ENCODE measurements at regions of chr6 and their contacts with region 1.

Region 1: DNA sequence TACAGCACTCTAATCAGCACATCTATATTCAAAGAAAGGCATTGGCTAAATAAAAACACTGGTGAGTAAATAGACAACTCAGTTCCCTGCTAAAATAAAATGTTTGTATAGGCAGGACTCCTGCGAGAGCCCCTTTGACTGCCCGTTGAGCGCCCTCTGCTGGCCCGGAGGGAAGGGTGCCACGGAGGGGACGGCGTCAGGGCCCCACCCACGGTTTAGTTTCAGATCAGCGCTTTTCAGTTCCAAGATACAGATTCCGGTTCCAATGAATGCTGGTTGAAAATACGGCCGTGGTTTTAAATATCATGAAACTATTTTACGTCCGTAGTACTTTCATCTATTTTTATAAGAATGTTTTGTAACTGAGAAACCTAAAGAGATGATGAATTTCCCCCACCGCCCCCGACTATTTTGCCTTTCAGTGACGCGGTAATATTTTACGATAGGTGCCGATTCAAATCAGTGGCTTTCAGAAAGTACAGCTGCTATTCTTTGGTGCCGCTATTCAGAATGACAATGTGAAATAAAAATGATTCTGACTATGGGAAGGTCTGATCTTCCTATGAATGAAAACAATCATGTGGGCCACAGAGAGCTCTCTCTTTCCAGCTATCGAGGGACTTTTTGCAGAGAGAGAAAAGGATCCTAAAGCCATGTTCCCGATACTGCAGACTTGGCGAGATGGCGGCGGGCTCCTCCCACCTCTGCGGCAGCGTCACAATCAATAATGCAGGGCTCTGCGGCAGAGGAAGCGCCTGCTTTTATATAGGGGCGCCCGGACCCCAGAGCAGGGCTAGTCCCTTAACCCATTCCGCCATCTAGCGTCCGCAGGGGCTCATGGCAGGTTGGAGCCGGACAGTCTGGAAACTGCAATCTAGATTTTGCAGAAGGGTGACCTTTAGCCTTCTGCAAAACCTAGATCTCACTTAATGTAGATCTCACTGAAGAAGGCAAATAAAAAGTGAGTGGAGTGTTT is 10.6 kb upstream of the CCN6 start:
- DNase-seq: peak; percentile 84 to 95 (median 91)
- ATAC-seq: peak; percentile 89 to 95 (median 90)
- H3K4me3 ChIP-seq: peak overlapping the region; percentile 63 to 80
- H3K4me3 Mint-ChIP-seq: peak overlapping the region; percentile 92 to 96 (median 96)
- H3K27ac ChIP-seq: peak overlapping the region; percentile 94
- H3K27ac Mint-ChIP-seq: peak overlapping the region; percentile 97 to 99
- H3K4me1 ChIP-seq: peaks cover 1 to 4% of the 10 kb centered on the region in 2 experiments
- H3K4me1 Mint-ChIP-seq: peaks cover 24 to 32% (median 28%) of the 10 kb centered on the region in 3 donors
- H3K27me3 ChIP-seq: no peaks in the 10 kb centered on the region
- H3K27me3 Mint-ChIP-seq: no peaks in the 10 kb centered on the region

Region 2: GRCh38 chr6:110873981-110874879 is 1169.1 kb before region 1 on chr6 and contains the start of gene AMD1:
- CTCF ChIA-PET with region 1: interaction called in 1 of 2 experiments, 5 read pairs
- POLR2A ChIA-PET with region 1: interaction called in 1 of 2 experiments, 16 read pairs
- DNase-seq: peak; percentile 79 to 98 (median 95)
- ATAC-seq: peak; percentile 78 to 80 (median 78)
- H3K4me3 ChIP-seq: peak within 1 kb of the TSS; percentile 91 to 97
- H3K4me3 Mint-ChIP-seq: peak within 1 kb of the TSS; percentile 97 to 99 (median 98)
- H3K27ac ChIP-seq: peak within 1 kb of the TSS; percentile 89
- H3K27ac Mint-ChIP-seq: peak within 1 kb of the TSS; percentile 98
- H3K4me1 ChIP-seq: peaks cover 20 to 28% of the 10 kb centered on the region in 2 experiments
- H3K4me1 Mint-ChIP-seq: peaks cover 28 to 40% (median 32%) of the 10 kb centered on the region in 3 donors
- H3K27me3 ChIP-seq: no peaks in the 10 kb centered on the region
- H3K27me3 Mint-ChIP-seq: no peaks in the 10 kb centered on the region
- total RNA-seq, gene AMD1: 54.8 to 117 (median 57.6) TPM

Region 3: DNA sequence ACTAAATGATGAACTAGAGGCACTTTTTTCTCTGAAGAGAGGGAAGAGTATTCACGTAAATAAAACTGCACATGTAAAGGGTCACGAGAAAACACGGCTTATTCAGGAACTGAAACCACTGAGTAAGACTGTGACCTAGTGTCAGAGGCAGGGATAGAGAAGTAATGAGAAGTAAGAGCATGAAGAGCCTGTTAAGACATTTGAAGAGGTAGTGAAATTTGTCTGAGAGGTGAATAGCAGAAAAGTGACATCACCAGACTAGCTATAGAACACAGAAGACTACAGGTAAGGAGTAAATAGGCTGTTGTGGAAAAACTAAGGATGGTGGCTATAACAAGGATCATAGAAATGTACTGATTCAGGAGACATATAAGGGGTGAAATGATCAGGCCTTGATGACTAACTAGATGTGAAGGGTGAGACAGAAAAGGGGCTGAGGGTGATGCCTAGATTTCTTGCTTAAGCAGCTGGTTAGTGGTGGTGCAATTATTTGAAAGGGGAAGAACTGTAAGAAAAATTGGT is 637.1 kb before region 1 on chr6:
- CTCF ChIA-PET with region 1: no interaction called
- POLR2A ChIA-PET with region 1: interaction called in 1 of 2 experiments, 14 read pairs
- DNase-seq: peak in 1 of 35 experiments; percentile 9
- ATAC-seq: no peak
- H3K4me3 ChIP-seq: no peak overlapping the region
- H3K4me3 Mint-ChIP-seq: no peak overlapping the region
- H3K27ac ChIP-seq: no peak overlapping the region
- H3K27ac Mint-ChIP-seq: peak overlapping the region in 1 of 2 donors; percentile 0
- H3K4me1 ChIP-seq: no peaks in the 10 kb centered on the region
- H3K4me1 Mint-ChIP-seq: peaks cover 0 to 9% (median 7%) of the 10 kb centered on the region in 3 donors
- H3K27me3 ChIP-seq: no peaks in the 10 kb centered on the region
- H3K27me3 Mint-ChIP-seq: no peaks in the 10 kb centered on the region

Region 4: DNA sequence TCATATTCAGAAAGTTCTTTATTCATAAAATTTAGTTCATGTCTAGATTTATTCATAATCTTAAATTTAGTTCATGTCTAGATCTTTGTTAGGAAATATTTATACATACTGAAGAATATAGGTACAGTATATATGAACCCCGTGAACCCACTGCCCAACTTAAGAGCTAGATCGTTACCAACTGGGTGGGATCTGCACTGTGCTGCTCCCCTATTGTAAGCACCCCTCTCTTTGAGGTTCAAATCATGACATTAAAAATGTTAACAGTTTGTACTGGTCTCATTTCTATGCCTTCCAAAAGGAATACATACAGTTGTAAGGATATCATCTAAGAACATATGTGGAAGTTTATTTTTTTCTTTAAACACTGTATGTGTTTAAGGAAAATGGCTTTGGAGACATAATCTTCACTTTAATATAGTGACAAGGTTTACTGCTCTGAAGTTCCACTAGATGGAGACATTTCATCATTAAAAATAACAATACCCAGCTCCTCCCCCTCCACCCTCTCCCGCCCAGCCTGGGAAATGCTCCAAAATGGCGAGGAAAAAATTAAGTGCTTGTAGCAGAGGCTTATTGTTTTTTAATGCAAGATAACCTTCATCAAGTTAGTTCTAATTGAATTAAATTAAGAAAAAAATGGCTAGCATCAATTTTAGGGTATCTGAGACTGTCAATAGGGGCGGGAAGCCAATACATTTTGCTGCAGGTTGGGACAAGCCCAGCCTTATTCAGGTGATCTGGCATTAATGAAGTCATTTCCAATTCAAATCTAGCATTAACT is 333.5 kb before region 1 on chr6:
- CTCF ChIA-PET with region 1: interaction called, 14 to 54 read pairs
- POLR2A ChIA-PET with region 1: interaction called, 4 to 5 read pairs
- DNase-seq: peak in 34 of 35 experiments; percentile 14 to 83 (median 54)
- ATAC-seq: peak; percentile 81 to 86 (median 83)
- H3K4me3 ChIP-seq: no peak overlapping the region
- H3K4me3 Mint-ChIP-seq: peak overlapping the region in 1 of 3 donors; percentile 30
- H3K27ac ChIP-seq: peak overlapping the region; percentile 59
- H3K27ac Mint-ChIP-seq: peak overlapping the region; percentile 81 to 87
- H3K4me1 ChIP-seq: peaks cover 37 to 42% of the 10 kb centered on the region in 2 experiments
- H3K4me1 Mint-ChIP-seq: peaks cover 50 to 70% (median 53%) of the 10 kb centered on the region in 3 donors
- H3K27me3 ChIP-seq: no peaks in the 10 kb centered on the region
- H3K27me3 Mint-ChIP-seq: no peaks in the 10 kb centered on the region

Region 5: GRCh38 chr6:111804627-111805235 is 238.6 kb before region 1 on chr6:
- CTCF ChIA-PET with region 1: interaction called in 1 of 2 experiments, 10 read pairs
- POLR2A ChIA-PET with region 1: interaction called in 1 of 2 experiments, 10 read pairs
- DNase-seq: peak in 34 of 35 experiments; percentile 36 to 86 (median 63)
- ATAC-seq: peak; percentile 73 to 83 (median 80)
- H3K4me3 ChIP-seq: no peak overlapping the region
- H3K4me3 Mint-ChIP-seq: peak overlapping the region; percentile 38 to 62 (median 58)
- H3K27ac ChIP-seq: peak overlapping the region; percentile 81
- H3K27ac Mint-ChIP-seq: peak overlapping the region; percentile 89 to 95
- H3K4me1 ChIP-seq: peaks cover 33 to 68% of the 10 kb centered on the region in 2 experiments
- H3K4me1 Mint-ChIP-seq: peaks cover 92 to 99% (median 97%) of the 10 kb centered on the region in 3 donors
- H3K27me3 ChIP-seq: no peaks in the 10 kb centered on the region
- H3K27me3 Mint-ChIP-seq: no peaks in the 10 kb centered on the region

Region 6: GRCh38 chr6:112010328-112010727 is 33.0 kb before region 1 on chr6:
- CTCF ChIA-PET with region 1: interaction called, 25 to 41 read pairs
- POLR2A ChIA-PET with region 1: interaction called in 1 of 2 experiments, 5 read pairs
- DNase-seq: peak in 2 of 35 experiments; percentile 43 to 58
- ATAC-seq: peak; percentile 73 to 89 (median 86)
- H3K4me3 ChIP-seq: no peak overlapping the region
- H3K4me3 Mint-ChIP-seq: no peak overlapping the region
- H3K27ac ChIP-seq: no peak overlapping the region
- H3K27ac Mint-ChIP-seq: peak overlapping the region in 1 of 2 donors; percentile 2
- H3K4me1 ChIP-seq: peaks cover 2 to 3% of the 10 kb centered on the region in 2 experiments
- H3K4me1 Mint-ChIP-seq: peaks cover 9 to 13% (median 9%) of the 10 kb centered on the region in 3 donors
- H3K27me3 ChIP-seq: no peaks in the 10 kb centered on the region
- H3K27me3 Mint-ChIP-seq: no peaks in the 10 kb centered on the region